CD8-positive, alpha-beta T cell (primary cell): ENCODE measurements at regions of chr2 and their contacts with region 1.

Region 1: GRCh38 chr2:215454519-215455246 is 18.8 kb upstream of the FN1 start:
- DNase-seq: peak in 2 of 9 experiments; percentile 34 to 48
- ATAC-seq: no peak
- H3K4me3 ChIP-seq: no peak overlapping the region
- H3K4me3 Mint-ChIP-seq: no peak overlapping the region
- H3K27ac ChIP-seq: no peak overlapping the region
- H3K27ac Mint-ChIP-seq: no peak overlapping the region
- H3K4me1 ChIP-seq: no peaks in the 10 kb centered on the region
- H3K4me1 Mint-ChIP-seq: no peaks in the 10 kb centered on the region
- H3K27me3 ChIP-seq: no peaks in the 10 kb centered on the region
- H3K27me3 Mint-ChIP-seq: peaks cover 19% of the 10 kb centered on the region
- CTCF ChIP-seq: peak; percentile 92

Region 2: GRCh38 chr2:215418064-215418963 is 36.4 kb before region 1 on chr2:
- CTCF ChIA-PET with region 1: no interaction called
- POLR2A ChIA-PET with region 1: no interaction called
- intact Hi-C with region 1: no loop called
- DNase-seq: no peak
- ATAC-seq: no peak
- H3K4me3 ChIP-seq: no peak overlapping the region
- H3K4me3 Mint-ChIP-seq: no peak overlapping the region
- H3K27ac ChIP-seq: no peak overlapping the region
- H3K27ac Mint-ChIP-seq: no peak overlapping the region
- H3K4me1 ChIP-seq: no peaks in the 10 kb centered on the region
- H3K4me1 Mint-ChIP-seq: no peaks in the 10 kb centered on the region
- H3K27me3 ChIP-seq: no peaks in the 10 kb centered on the region
- H3K27me3 Mint-ChIP-seq: peaks cover 30% of the 10 kb centered on the region
- CTCF ChIP-seq: no peak

Region 3: DNA sequence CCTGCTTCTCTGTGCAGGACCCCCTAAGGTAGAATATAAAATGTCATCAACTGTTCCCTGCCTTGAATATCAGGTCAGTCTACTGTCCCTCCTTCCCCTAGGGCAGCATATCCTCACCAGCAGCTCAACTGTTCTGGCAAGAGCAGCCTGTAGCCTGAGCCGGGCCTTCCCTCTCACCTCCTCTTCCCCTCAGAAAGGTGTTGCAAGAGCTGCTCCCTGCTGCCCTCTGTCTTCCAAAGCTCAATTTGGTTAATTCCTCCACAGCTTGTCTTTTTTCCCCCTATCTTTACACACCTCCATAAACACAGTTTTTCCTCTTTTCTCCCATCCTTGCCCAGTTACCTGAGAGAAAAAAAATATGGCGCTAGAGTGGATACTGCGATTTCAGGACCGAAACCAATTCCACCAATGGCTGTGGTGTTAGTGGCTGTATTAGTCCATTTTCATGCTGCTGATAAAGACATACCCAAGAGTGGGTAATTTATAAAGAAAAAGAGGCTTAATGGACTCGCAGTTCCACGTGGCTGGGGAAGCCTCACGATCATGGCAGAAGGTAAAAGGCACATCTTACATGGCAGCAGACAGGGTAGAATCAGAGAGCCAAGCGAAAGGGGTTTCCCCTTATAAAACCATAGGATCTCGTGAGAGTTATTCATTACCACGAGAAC is 374.0 kb after region 1 on chr2:
- CTCF ChIA-PET with region 1: interaction called, 9 read pairs
- POLR2A ChIA-PET with region 1: interaction called, 3 read pairs
- intact Hi-C with region 1: loop called in 1 of 2 experiments (anchors 2 kb)
- DNase-seq: peak in 5 of 9 experiments; percentile 19 to 64 (median 53)
- ATAC-seq: no peak
- H3K4me3 ChIP-seq: no peak overlapping the region
- H3K4me3 Mint-ChIP-seq: no peak overlapping the region
- H3K27ac ChIP-seq: no peak overlapping the region
- H3K27ac Mint-ChIP-seq: no peak overlapping the region
- H3K4me1 ChIP-seq: no peaks in the 10 kb centered on the region
- H3K4me1 Mint-ChIP-seq: no peaks in the 10 kb centered on the region
- H3K27me3 ChIP-seq: no peaks in the 10 kb centered on the region
- H3K27me3 Mint-ChIP-seq: no peaks in the 10 kb centered on the region
- CTCF ChIP-seq: peak; percentile 38

Region 4: DNA sequence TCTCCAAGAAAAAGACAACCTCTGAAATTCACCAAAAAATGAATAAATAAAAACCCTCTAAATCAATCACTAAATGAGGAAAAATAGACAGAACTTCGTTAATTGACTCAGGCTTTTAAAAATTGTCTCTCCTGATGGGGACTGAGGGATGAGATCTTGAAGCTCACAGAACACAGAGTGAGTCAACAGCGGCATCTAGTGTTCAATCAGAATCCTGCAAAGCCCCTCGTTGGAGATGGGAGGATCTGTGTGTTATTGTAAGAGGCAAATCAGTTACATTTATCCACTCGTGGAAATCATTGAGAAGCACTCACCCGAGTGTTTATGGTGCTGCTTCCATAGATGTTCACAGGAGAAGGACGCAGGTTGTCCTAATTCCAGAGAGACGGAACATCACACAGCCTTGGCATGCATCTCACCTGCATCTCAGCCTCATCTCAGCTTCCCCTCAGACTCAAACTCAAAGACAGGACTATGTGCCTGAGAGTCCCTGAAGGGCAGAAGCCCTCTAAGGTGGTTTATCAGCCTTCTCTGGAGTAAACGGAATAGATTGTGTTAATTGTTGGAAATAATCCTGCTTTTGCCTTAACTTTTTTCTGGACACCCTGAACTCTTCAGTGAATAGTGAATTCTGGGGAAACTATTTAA is 476.7 kb after region 1 on chr2:
- CTCF ChIA-PET with region 1: interaction called, 11 read pairs
- POLR2A ChIA-PET with region 1: no interaction called
- intact Hi-C with region 1: loop called (anchors 1 to 5 kb)
- DNase-seq: peak; percentile 11 to 63 (median 39)
- ATAC-seq: peak; percentile 64
- H3K4me3 ChIP-seq: no peak overlapping the region
- H3K4me3 Mint-ChIP-seq: no peak overlapping the region
- H3K27ac ChIP-seq: no peak overlapping the region
- H3K27ac Mint-ChIP-seq: no peak overlapping the region
- H3K4me1 ChIP-seq: no peaks in the 10 kb centered on the region
- H3K4me1 Mint-ChIP-seq: no peaks in the 10 kb centered on the region
- H3K27me3 ChIP-seq: peaks cover 0 to 4% of the 10 kb centered on the region in 2 experiments
- H3K27me3 Mint-ChIP-seq: no peaks in the 10 kb centered on the region
- CTCF ChIP-seq: peak; percentile 94